Esophagus squamous epithelium (tissue), 5 donors: ENCODE measurements at regions of chrX and their contacts with region 1.

Region 1: DNA sequence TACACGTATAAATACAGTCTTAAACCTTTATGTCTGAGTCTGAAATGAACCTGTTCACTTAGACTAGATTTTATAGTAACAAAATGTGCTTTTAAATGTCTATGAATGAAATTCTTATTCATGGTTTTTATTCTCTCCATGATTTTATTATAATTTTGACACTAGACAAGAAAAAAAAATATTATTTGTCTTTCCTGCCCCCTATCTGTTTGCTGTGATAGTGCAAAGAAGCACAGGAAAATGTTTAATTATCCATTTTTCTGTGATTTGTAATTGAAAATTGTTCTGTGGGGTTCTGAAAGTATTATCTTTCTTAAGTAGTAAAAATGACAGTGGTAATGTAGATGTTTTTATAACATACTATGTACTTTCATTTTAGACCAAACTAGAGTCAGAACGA is 52.0 kb downstream of the INTS6L start:
- DNase-seq: no peak
- H3K4me3 ChIP-seq: no peak overlapping the region
- H3K27ac ChIP-seq: no peak overlapping the region
- H3K4me1 ChIP-seq: no peaks in the 10 kb centered on the region
- H3K27me3 ChIP-seq: no peaks in the 10 kb centered on the region
- CTCF ChIP-seq: peak in 4 of 6 experiments; percentile 30 to 50 (median 44)
- POLR2A ChIP-seq: no peak

Region 2: GRCh38 chrX:135050603-135051002 is 521.8 kb before region 1 on chrX:
- intact Hi-C with region 1: no loop called
- DNase-seq: no peak
- H3K4me3 ChIP-seq: peak overlapping the region in 3 of 4 donors; percentile 60 to 71 (median 62)
- H3K27ac ChIP-seq: peak overlapping the region in 2 of 4 donors; percentile 89 to 93
- H3K4me1 ChIP-seq: peaks cover 4 to 30% (median 10%) of the 10 kb centered on the region in 3 donors
- H3K27me3 ChIP-seq: no peaks in the 10 kb centered on the region
- CTCF ChIP-seq: no peak
- POLR2A ChIP-seq: no peak

Region 3: GRCh38 chrX:135484641-135485289 is 87.7 kb before region 1 on chrX:
- intact Hi-C with region 1: loop called (anchors 10 kb)
- DNase-seq: no peak
- H3K4me3 ChIP-seq: no peak overlapping the region
- H3K27ac ChIP-seq: no peak overlapping the region
- H3K4me1 ChIP-seq: no peaks in the 10 kb centered on the region
- H3K27me3 ChIP-seq: no peaks in the 10 kb centered on the region
- CTCF ChIP-seq: peak in 5 of 6 experiments; percentile 42 to 54 (median 44)
- POLR2A ChIP-seq: no peak